Heart left ventricle (tissue), 16 donors: ENCODE measurements at regions of chr3 and their contacts with region 1.

Region 1: DNA sequence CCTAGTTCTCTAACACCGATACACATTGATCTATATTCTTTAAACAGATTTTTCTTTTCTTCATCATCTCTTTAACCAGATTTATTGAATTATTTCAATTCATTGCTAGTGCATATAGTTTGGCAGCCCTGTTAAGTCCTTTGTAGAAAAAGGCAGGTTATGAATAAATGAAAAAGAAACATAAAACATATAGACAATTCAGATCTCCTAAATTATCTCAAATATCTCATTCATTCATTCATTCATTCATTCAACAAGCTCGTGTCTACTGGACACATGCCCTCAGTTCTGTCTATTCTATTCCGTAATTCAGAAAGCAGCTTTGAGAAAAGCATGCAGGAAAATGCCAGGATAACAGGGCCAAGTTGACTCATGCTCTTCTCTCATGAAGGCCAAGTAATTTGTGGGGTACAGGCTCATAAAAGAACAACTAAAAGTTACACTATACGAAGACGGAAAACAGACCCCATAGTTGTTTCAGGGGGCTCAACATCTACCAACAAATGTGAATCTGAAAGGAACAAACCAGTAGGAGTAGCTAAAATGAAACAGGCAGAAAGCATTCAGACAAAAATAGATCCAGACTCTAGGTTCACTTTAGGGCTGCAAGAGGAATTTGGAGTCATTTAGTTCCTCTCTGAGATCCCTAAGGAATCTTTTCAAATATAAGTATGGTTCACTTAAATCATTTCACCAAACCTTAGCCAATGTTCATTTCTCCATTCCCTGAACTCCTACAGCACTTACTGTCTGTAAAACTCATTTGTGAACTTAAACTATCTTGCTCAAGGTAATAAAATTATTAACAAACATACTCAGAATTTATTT is 7.5 kb downstream of the ZNF148 start:
- DNase-seq: no peak
- ATAC-seq: no peak
- H3K4me3 ChIP-seq: no peak overlapping the region
- H3K27ac ChIP-seq: peak overlapping the region in 5 of 12 donors; percentile 17 to 40 (median 23)
- H3K4me1 ChIP-seq: peaks cover 2 to 58% (median 31%) of the 10 kb centered on the region in 12 donors
- H3K27me3 ChIP-seq: no peaks in the 10 kb centered on the region
- CTCF ChIP-seq: no peak
- POLR2A ChIP-seq: no peak

Region 2: DNA sequence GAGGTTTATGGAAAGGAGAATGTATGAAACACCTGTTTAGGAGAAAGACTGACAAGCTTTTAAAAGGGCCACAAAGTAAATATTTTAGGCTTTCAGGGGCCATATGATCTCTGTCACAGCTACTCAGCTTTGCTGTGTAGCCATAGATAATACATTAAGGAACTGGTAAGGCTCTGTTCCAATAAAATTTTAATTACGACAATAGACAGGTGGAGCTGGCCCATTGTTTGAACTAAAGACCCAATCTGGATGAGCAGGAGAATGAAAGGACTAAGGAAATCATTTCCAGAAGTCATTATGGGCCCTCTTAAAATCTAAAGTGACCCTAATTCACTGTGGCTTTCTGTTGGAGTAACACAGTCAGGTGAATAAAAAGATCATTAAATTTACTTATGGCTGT is 106.6 kb before region 1 on chr3:
- intact Hi-C with region 1: loop called in 1 of 10 experiments (anchors 10 kb)
- DNase-seq: no peak
- ATAC-seq: no peak
- H3K4me3 ChIP-seq: no peak overlapping the region
- H3K27ac ChIP-seq: no peak overlapping the region
- H3K4me1 ChIP-seq: peaks cover 0 to 6% (median 0%) of the 10 kb centered on the region in 12 donors
- H3K27me3 ChIP-seq: no peaks in the 10 kb centered on the region
- CTCF ChIP-seq: no peak
- POLR2A ChIP-seq: no peak

Region 3: GRCh38 chr3:125552401-125552800 is 184.8 kb after region 1 on chr3:
- intact Hi-C with region 1: no loop called
- DNase-seq: no peak
- ATAC-seq: no peak
- H3K4me3 ChIP-seq: no peak overlapping the region
- H3K27ac ChIP-seq: no peak overlapping the region
- H3K4me1 ChIP-seq: no peaks in the 10 kb centered on the region
- H3K27me3 ChIP-seq: no peaks in the 10 kb centered on the region
- CTCF ChIP-seq: no peak
- POLR2A ChIP-seq: no peak